HEK293T (cell line): ENCODE measurements at regions of chr3 and their contacts with region 1.

Region 1: GRCh38 chr3:12495749-12496452 is 11.6 kb downstream of the TSEN2 start:
- DNase-seq: no peak

Region 2: GRCh38 chr3:12484198-12484974 is 11.5 kb before region 1 on chr3 and contains the start of gene TSEN2:
- CTCF ChIA-PET with region 1: interaction called, 5 read pairs
- POLR2A ChIA-PET with region 1: interaction called, 13 read pairs
- DNase-seq: peak; percentile 99